Lower lobe of right lung (tissue), 2 donors: ENCODE measurements at regions of chr7 and their contacts with region 1.

Region 1: GRCh38 chr7:156473476-156474240 is 166.9 kb upstream of the RNF32 start:
- DNase-seq: no peak
- ATAC-seq: peak in 1 of 2 donors; percentile 66
- H3K4me3 ChIP-seq: no peak overlapping the region
- H3K27ac ChIP-seq: no peak overlapping the region
- H3K4me1 ChIP-seq: no peaks in the 10 kb centered on the region
- H3K27me3 ChIP-seq: no peaks in the 10 kb centered on the region
- CTCF ChIP-seq: peak; percentile 69

Region 2: DNA sequence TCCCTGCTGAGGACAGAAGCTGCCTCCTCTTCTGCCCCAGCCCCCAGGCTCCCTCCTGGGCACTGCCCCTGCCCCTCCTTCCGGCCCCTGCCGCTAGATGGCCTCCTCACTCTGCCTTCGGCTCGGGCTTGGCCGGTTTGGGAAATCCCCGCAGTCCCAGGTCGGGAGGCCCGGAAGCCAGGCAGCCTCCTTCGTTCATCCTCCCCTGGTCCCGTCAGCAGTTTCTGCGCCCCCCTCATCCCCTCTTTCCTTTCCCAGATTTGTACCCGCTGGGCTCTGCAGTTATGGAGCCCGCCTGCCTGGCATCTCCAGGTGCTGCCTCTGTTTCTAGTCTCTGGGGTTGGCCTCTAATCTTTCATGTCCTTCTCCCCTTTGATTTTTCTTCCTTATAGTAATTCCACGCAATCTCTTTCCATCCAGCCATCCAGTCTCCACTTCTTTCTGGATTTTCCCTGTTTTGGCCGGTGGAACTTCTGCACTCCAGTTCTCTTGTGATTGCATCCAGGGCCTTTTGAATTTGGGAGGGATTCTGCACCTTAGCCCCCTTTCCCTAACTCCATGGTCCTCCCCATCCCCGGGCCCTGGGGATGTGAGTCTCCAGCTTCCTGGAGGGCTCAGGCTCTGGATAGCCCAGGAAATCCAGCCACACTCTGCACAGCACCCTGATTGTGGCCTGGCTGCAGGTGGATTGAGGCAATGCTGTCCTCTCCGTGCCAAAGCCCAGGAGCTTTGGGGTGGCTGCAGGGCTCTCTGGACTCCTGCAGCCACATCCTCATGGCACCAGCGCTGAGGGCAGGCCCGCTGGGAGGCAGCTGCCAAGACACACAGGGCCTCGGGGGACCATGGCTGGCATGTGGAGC is 658.1 kb before region 1 on chr7:
- intact Hi-C with region 1: loop called (anchors 10 kb)
- DNase-seq: peak; percentile 79
- ATAC-seq: peak; percentile 81 to 85
- H3K4me3 ChIP-seq: no peak overlapping the region
- H3K27ac ChIP-seq: no peak overlapping the region
- H3K4me1 ChIP-seq: peaks cover 12% of the 10 kb centered on the region
- H3K27me3 ChIP-seq: peaks cover 58% of the 10 kb centered on the region
- CTCF ChIP-seq: peak; percentile 54

Region 3: GRCh38 chr7:156534925-156535324 is 61.3 kb after region 1 on chr7:
- intact Hi-C with region 1: no loop called
- DNase-seq: no peak
- ATAC-seq: no peak
- H3K4me3 ChIP-seq: no peak overlapping the region
- H3K27ac ChIP-seq: no peak overlapping the region
- H3K4me1 ChIP-seq: no peaks in the 10 kb centered on the region
- H3K27me3 ChIP-seq: no peaks in the 10 kb centered on the region
- CTCF ChIP-seq: no peak